CD4-positive, alpha-beta memory T cell (primary cell): ENCODE measurements at regions of chr1 and their contacts with region 1.

Region 1: GRCh38 chr1:145927063-145927886 is at the start of gene RBM8A:
- DNase-seq: peak; percentile 94 to 98 (median 97)
- H3K4me3 ChIP-seq: peak within 1 kb of the TSS; percentile 96 to 99
- H3K4me3 Mint-ChIP-seq: peak within 1 kb of the TSS in 5 of 8 donors; percentile 20 to 69 (median 42)
- H3K27ac ChIP-seq: peak within 1 kb of the TSS; percentile 96
- H3K27ac Mint-ChIP-seq: peak within 1 kb of the TSS in 4 of 7 donors; percentile 72 to 94 (median 82)
- H3K4me1 ChIP-seq: peaks cover 29% of the 10 kb centered on the region
- H3K4me1 Mint-ChIP-seq: peaks cover 10 to 25% (median 17%) of the 10 kb centered on the region in 4 donors
- H3K27me3 ChIP-seq: no peaks in the 10 kb centered on the region
- H3K27me3 Mint-ChIP-seq: no peaks in the 10 kb centered on the region
- total RNA-seq, gene RBM8A: 116 to 122 TPM

Region 2: DNA sequence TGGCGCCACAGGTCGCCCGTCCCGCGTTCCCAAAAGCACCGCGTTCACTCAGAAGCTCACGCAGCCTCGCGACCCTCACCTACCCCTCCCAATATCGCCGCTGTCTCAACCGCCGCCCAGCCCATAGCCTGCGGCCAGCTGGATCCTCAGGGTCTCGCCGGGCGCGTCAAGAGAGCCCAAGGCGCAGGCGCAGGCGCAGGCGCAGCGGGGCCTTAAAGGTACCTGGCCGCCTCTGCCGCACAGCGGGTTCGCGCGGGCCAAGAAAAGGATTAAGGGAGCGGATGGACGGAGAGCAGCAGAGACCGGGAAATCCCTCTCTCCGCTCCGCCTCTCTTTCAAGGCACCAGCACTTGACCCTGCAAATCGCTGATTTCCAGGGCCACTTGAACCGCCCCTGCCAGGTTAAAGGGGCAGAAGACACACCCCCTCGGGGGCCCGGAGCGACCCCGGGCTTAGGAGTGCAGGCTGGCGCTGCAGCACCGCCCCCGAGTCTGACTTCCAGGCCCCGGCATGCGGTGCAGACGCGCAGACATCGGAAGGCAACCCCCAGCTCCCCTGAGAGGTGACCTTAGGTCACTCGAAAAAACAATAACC is 501.7 kb before region 1 on chr1 and contains the start of gene NBPF20:
- CTCF ChIA-PET with region 1: no interaction called
- POLR2A ChIA-PET with region 1: no interaction called
- intact Hi-C with region 1: no loop called
- DNase-seq: peak; percentile 62 to 82 (median 77)
- H3K4me3 ChIP-seq: peak within 1 kb of the TSS; percentile 59 to 61
- H3K4me3 Mint-ChIP-seq: peak within 1 kb of the TSS; percentile 91 to 98 (median 96)
- H3K27ac ChIP-seq: peak within 1 kb of the TSS; percentile 46
- H3K27ac Mint-ChIP-seq: peak within 1 kb of the TSS; percentile 66 to 96 (median 92)
- H3K4me1 ChIP-seq: peaks cover 5% of the 10 kb centered on the region
- H3K4me1 Mint-ChIP-seq: peaks cover 4 to 17% (median 9%) of the 10 kb centered on the region in 4 donors
- H3K27me3 ChIP-seq: peaks cover 4% of the 10 kb centered on the region
- H3K27me3 Mint-ChIP-seq: peaks cover 28 to 33% of the 10 kb centered on the region in 2 donors
- total RNA-seq, gene NBPF20: 3.8 to 5.3 TPM

Region 3: DNA sequence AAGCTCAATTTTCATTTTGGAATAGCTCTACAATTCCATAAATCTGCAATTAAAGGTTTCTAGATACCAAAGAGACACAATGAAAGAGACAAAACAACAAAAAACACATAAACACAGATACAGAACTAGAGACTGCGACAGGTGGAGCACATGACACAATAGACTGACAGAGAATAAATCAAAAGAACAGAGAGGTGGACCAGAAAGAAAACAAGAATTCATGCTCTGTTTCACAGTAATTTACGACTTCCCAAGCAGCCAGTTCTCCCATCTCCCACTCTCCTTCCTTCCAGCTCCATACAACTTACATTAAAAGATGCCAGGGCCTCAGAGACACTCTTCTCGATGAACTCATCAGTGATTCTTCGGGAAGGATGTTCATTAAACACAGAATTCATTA is 15.1 kb after region 1 on chr1:
- CTCF ChIA-PET with region 1: interaction called, 5 read pairs
- POLR2A ChIA-PET with region 1: interaction called, 13 read pairs
- intact Hi-C with region 1: no loop called
- DNase-seq: no peak
- H3K4me3 ChIP-seq: no peak overlapping the region
- H3K4me3 Mint-ChIP-seq: no peak overlapping the region
- H3K27ac ChIP-seq: no peak overlapping the region
- H3K27ac Mint-ChIP-seq: peak overlapping the region in 3 of 7 donors; percentile 25 to 45 (median 42)
- H3K4me1 ChIP-seq: no peaks in the 10 kb centered on the region
- H3K4me1 Mint-ChIP-seq: peaks cover 6 to 17% (median 8%) of the 10 kb centered on the region in 4 donors
- H3K27me3 ChIP-seq: no peaks in the 10 kb centered on the region
- H3K27me3 Mint-ChIP-seq: no peaks in the 10 kb centered on the region

Region 4: DNA sequence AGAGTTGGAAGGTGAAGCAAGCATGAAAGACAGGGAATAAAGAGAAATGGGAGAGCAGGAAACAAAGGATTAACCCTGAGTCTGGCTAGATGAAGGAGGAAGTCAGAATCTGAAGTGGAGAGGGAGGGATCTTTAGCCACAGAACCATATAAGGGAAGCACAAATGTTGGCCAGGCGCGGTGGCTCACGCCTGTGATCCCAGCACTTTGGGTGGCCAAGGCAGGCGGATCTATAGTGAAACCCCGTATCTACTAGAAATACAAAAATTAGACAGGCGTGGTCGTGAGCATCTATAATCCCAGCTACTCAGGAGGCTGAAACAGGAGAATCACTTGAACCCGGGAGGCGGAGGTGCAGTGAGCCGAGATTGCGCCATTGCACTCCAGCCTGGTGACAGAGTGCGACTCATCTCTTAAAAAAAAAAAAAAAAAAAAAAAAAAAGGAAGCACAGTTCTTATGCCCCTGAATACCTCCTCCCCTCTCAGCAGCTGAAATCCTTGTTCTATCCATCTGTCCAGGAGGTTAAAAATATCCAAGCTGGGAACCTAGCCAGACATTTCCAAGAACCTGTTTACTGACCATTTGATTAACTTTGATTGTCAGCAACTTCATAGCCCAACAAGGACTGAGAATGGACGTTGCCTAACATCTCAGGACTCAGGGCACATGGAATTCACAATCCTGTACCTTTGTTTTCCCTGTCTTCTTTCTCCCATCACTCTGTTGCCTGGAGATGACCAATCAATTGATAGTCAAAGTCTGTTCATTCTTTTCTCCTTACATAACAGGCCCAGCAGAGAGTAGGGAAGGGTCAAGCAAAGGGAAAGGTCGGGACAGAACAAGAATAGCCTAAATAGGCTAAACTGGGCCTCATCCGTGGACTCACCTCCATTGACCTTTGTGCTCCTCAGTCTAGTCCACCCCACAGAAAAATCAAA is 58.5 kb after region 1 on chr1:
- CTCF ChIA-PET with region 1: interaction called, 29 read pairs
- POLR2A ChIA-PET with region 1: interaction called, 54 read pairs
- intact Hi-C with region 1: no loop called
- DNase-seq: no peak
- H3K4me3 ChIP-seq: peak overlapping the region in 1 of 2 donors; percentile 15
- H3K4me3 Mint-ChIP-seq: peak overlapping the region; percentile 52 to 92 (median 76)
- H3K27ac ChIP-seq: no peak overlapping the region
- H3K27ac Mint-ChIP-seq: peak overlapping the region in 6 of 7 donors; percentile 88 to 94 (median 92)
- H3K4me1 ChIP-seq: peaks cover 85% of the 10 kb centered on the region
- H3K4me1 Mint-ChIP-seq: peaks cover 25 to 67% (median 43%) of the 10 kb centered on the region in 4 donors
- H3K27me3 ChIP-seq: no peaks in the 10 kb centered on the region
- H3K27me3 Mint-ChIP-seq: no peaks in the 10 kb centered on the region

Region 5: DNA sequence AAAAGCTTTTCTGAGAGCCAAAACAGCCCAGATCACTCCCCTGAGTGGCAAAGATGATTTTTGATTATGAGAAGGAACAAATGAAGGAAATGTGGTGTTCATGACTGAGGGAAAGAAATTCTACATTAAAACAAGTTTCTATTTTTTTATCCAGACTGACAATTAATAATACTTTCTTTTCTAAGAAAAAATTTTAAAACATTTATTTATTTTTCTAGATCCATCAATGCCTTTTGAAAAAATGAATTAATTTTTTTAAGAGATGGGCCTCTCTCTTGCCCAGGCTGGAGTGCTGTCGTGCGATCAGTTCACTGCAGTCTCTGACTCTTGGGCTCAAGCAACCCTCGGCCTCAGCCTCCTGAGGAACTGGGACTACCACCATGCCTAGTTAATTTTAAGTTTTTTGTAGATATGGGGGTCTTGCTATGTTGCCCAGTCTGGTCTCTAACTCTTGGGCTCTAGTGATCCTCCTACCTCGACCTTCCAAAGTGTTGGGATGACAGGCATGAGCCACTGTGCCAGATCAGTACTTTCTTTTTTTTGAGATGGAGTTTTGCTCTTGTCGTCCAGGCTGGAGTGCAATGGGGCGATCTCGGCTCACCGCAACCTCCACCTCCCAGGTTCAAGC is 80.3 kb after region 1 on chr1:
- CTCF ChIA-PET with region 1: interaction called, 4 read pairs
- POLR2A ChIA-PET with region 1: interaction called, 14 read pairs
- intact Hi-C with region 1: no loop called
- DNase-seq: no peak
- H3K4me3 ChIP-seq: no peak overlapping the region
- H3K4me3 Mint-ChIP-seq: peak overlapping the region in 6 of 8 donors; percentile 79 to 87 (median 84)
- H3K27ac ChIP-seq: no peak overlapping the region
- H3K27ac Mint-ChIP-seq: peak overlapping the region; percentile 45 to 95 (median 88)
- H3K4me1 ChIP-seq: peaks cover 47% of the 10 kb centered on the region
- H3K4me1 Mint-ChIP-seq: peaks cover 24 to 54% (median 33%) of the 10 kb centered on the region in 4 donors
- H3K27me3 ChIP-seq: no peaks in the 10 kb centered on the region
- H3K27me3 Mint-ChIP-seq: no peaks in the 10 kb centered on the region